Endothelial cell of umbilical vein (primary cell): ENCODE measurements at regions of chr1 and their contacts with region 1.

Region 1: GRCh38 chr1:11681071-11681771 is at the start of gene MAD2L2:
- DNase-seq: peak; percentile 80
- H3K4me3 ChIP-seq: peak within 1 kb of the TSS; percentile 52 to 97 (median 61)
- H3K27ac ChIP-seq: peak within 1 kb of the TSS; percentile 49
- H3K4me1 ChIP-seq: peaks cover 7% of the 10 kb centered on the region
- H3K27me3 ChIP-seq: peaks cover 11 to 12% of the 10 kb centered on the region in 2 experiments
- CTCF ChIP-seq: no peak
- POLR2A ChIP-seq: peak; percentile 68
- total RNA-seq, gene MAD2L2: 35.9 and 39.5 TPM in 2 replicates

Region 2: DNA sequence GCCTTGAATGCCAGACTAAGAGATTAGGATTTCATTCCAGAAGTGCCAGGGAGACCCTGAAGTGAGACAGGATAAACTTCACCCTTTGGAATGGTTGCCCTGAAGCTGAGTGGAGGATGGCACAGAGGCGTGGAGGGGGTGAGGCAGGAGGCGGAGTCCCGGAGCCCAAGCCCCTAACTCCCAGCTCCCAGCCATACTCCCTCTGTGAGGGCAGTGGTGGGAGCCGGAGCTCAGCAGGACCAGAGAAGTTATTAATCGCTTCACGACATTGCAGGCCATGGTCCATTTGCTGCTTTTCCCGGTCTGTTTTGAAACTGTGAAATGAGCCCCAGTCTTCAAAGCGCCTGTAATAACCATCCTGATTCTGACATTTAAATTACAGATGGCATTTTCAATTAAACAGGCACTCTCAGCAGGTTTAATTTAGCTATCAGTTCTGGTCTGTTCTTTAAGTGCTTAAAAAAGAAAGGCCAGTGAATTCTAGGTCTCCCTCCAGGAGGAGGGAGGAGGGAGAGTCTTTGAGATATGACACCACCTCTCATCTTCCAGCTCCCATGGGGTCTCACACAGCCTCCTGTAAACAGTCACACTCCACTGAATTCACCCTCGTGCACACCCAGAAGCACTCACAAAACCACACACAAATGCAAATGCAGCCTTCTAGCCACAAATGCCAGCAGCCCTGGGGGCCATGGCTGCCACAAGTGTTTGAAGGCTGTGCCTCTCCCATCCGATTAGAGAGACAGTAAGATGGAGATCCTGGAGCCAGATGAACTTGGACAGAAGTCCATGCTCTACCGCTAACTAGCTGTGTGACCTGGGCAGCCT is 46.6 kb before region 1 on chr1:
- CTCF ChIA-PET with region 1: no interaction called
- POLR2A ChIA-PET with region 1: no interaction called
- dilution Hi-C with region 1: no loop called
- intact Hi-C with region 1: no loop called
- DNase-seq: no peak
- H3K4me3 ChIP-seq: no peak overlapping the region
- H3K27ac ChIP-seq: no peak overlapping the region
- H3K4me1 ChIP-seq: no peaks in the 10 kb centered on the region
- H3K27me3 ChIP-seq: no peaks in the 10 kb centered on the region
- CTCF ChIP-seq: no peak
- POLR2A ChIP-seq: no peak

Region 3: DNA sequence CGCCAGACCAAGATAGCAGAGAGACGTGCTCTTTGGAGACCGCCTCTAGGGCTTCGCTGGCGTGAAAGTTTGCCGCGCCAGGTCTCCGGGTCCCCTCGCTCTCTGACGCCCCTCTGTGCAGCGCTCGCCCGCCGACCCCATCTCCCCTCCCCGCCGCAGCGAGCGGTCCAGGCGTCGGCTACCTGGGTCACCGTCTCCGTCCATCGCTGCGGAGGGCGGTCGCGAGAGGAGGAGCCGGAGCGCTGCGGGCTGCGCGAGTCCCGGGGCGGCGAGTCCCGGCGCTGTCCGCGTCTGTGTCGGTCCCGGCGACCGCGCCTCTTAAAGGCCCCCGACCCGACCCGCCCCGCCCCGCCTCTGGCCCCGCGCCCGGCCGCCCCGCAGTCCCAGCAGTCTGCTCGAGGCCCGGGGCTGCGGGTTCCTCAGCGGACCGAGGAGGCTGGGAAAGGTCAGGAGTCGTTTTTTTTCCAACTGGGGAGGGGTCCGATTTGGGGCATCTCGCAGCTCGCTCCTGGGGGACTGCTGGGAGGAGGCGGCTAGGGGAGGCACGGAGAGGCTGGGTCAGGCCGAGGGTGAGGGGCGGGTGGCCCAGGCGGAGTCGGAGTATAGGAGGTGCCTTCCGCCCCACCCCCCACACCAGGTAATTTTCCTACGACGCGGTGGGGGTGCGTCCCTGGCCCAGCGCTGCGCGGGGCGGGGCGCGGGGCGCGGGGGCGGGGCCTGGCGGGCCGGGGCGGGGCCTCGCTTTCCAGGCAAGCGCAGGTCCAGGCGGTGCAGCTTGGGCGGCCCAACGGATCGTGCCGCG is 26.9 kb before region 1 on chr1 and contains the starts of genes FBXO2 and FBXO44:
- CTCF ChIA-PET with region 1: interaction called, 5 read pairs
- POLR2A ChIA-PET with region 1: no interaction called
- dilution Hi-C with region 1: no loop called
- intact Hi-C with region 1: loop called (anchors 1 kb)
- DNase-seq: no peak
- H3K4me3 ChIP-seq: peak within 1 kb of the TSS; percentile 6 to 62 (median 34)
- H3K27ac ChIP-seq: no peak within 1 kb of the TSS
- H3K4me1 ChIP-seq: peaks cover 3% of the 10 kb centered on the region
- H3K27me3 ChIP-seq: no peaks in the 10 kb centered on the region
- CTCF ChIP-seq: no peak
- POLR2A ChIP-seq: no peak
- total RNA-seq, gene FBXO2: 0.42 and 0.88 TPM in 2 replicates
- total RNA-seq, gene FBXO44: 14.5 and 16.8 TPM in 2 replicates

Region 4: DNA sequence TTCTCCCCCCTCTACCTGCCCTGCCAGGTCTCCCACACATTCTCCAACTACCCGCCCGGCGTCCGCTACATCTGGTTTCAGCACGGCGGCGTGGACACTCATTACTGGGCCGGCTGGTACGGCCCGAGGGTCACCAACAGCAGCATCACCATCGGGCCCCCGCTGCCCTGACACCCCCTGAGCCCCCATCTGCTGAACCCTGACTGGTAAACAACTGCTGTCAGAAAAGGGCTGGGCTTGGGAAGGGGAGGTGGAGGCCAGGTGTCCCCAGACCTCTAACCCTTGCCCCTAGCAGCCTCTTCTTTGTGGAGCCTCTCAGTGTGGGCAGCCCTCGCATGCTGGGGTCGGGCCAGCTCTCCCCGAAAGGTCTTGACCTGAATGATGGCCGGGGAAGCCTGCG is 20.1 kb before region 1 on chr1:
- CTCF ChIA-PET with region 1: interaction called, 27 read pairs
- POLR2A ChIA-PET with region 1: no interaction called
- dilution Hi-C with region 1: no loop called
- intact Hi-C with region 1: loop called (anchors 1 kb)
- DNase-seq: no peak
- H3K4me3 ChIP-seq: no peak overlapping the region
- H3K27ac ChIP-seq: no peak overlapping the region
- H3K4me1 ChIP-seq: no peaks in the 10 kb centered on the region
- H3K27me3 ChIP-seq: no peaks in the 10 kb centered on the region
- CTCF ChIP-seq: no peak
- POLR2A ChIP-seq: no peak

Region 5: GRCh38 chr1:11693024-11693590 is 11.9 kb after region 1 on chr1:
- CTCF ChIA-PET with region 1: interaction called, 5 read pairs
- POLR2A ChIA-PET with region 1: no interaction called
- dilution Hi-C with region 1: no loop called
- intact Hi-C with region 1: loop called (anchors 1 kb)
- DNase-seq: peak; percentile 87
- H3K4me3 ChIP-seq: no peak overlapping the region
- H3K27ac ChIP-seq: no peak overlapping the region
- H3K4me1 ChIP-seq: peaks cover 19% of the 10 kb centered on the region
- H3K27me3 ChIP-seq: peaks cover 25 to 32% of the 10 kb centered on the region in 2 experiments
- CTCF ChIP-seq: no peak
- POLR2A ChIP-seq: no peak

Region 6: DNA sequence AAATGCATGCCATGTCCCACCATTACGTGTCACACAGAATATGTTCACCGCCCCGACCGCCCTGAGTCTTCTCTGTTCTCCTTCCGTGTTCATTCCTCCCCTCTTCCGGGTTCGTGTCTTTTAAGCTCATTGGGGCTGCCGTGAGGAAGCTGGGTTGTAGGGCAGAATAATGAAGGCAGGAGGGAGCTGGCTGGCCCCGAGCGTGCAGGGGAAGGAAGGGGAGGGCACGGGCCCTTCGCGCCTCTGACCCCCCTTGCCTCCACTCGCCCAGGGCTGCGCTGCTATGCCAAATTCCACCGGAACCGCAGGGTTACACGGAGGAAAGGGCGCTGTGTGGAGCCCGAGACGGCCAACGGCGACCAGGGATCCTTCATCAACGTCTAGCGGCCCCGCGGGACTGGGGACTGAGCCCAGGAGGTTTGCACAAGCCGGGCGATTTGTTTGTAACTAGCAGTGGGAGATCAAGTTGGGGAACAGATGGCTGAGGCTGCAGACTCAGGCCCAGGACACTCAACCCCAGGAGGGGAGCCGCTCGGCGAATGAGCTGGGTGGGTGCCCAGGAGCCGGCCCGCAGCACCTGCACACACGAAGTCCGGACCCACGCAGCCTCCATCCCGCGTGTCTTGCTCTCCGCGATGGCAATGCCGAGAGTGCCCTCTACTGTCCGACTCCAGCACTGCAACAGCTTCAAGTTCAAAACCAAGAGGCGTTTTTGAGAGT is 38.3 kb after region 1 on chr1:
- CTCF ChIA-PET with region 1: interaction called, 10 read pairs
- POLR2A ChIA-PET with region 1: no interaction called
- dilution Hi-C with region 1: no loop called
- intact Hi-C with region 1: loop called (anchors 5 kb)
- DNase-seq: peak; percentile 76
- H3K4me3 ChIP-seq: peak overlapping the region in 2 of 3 experiments; percentile 4 to 34
- H3K27ac ChIP-seq: no peak overlapping the region
- H3K4me1 ChIP-seq: peaks cover 4% of the 10 kb centered on the region
- H3K27me3 ChIP-seq: peaks cover 0 to 4% of the 10 kb centered on the region in 2 experiments
- CTCF ChIP-seq: peak; percentile 88 to 91
- POLR2A ChIP-seq: no peak

Region 7: GRCh38 chr1:11979851-11980675 is 298.8 kb after region 1 on chr1 and contains the start of gene MFN2:
- CTCF ChIA-PET with region 1: no interaction called
- POLR2A ChIA-PET with region 1: no interaction called
- dilution Hi-C with region 1: no loop called
- intact Hi-C with region 1: loop called (anchors 5 kb)
- DNase-seq: peak; percentile 99
- H3K4me3 ChIP-seq: peak within 1 kb of the TSS; percentile 86 to 94 (median 89)
- H3K27ac ChIP-seq: peak within 1 kb of the TSS; percentile 69
- H3K4me1 ChIP-seq: peaks cover 18% of the 10 kb centered on the region
- H3K27me3 ChIP-seq: no peaks in the 10 kb centered on the region
- CTCF ChIP-seq: no peak
- POLR2A ChIP-seq: peak; percentile 61
- total RNA-seq, gene MFN2: 66.6 and 82.4 TPM in 2 replicates